Activated naive CD4-positive, alpha-beta T cell treated with anti-CD3 and anti-CD28 coated beads for 36 hours (primary cell): ENCODE measurements at regions of chr9 and their contacts with region 1.

Region 1: GRCh38 chr9:77475641-77476473 is 172.3 kb downstream of the GNA14 start:
- DNase-seq: peak; percentile 87
- H3K4me3 Mint-ChIP-seq: no peak overlapping the region
- H3K27ac Mint-ChIP-seq: peak overlapping the region; percentile 91
- H3K4me1 Mint-ChIP-seq: peaks cover 27% of the 10 kb centered on the region
- H3K27me3 Mint-ChIP-seq: no peaks in the 10 kb centered on the region

Region 2: GRCh38 chr9:76441551-76442322 is 1034.1 kb before region 1 on chr9:
- CTCF ChIA-PET with region 1: no interaction called
- intact Hi-C with region 1: loop called (anchors 5 kb)
- DNase-seq: peak; percentile 49
- H3K4me3 Mint-ChIP-seq: peak overlapping the region; percentile 28
- H3K27ac Mint-ChIP-seq: peak overlapping the region; percentile 77
- H3K4me1 Mint-ChIP-seq: peaks cover 24% of the 10 kb centered on the region
- H3K27me3 Mint-ChIP-seq: peaks cover 8% of the 10 kb centered on the region

Region 3: DNA sequence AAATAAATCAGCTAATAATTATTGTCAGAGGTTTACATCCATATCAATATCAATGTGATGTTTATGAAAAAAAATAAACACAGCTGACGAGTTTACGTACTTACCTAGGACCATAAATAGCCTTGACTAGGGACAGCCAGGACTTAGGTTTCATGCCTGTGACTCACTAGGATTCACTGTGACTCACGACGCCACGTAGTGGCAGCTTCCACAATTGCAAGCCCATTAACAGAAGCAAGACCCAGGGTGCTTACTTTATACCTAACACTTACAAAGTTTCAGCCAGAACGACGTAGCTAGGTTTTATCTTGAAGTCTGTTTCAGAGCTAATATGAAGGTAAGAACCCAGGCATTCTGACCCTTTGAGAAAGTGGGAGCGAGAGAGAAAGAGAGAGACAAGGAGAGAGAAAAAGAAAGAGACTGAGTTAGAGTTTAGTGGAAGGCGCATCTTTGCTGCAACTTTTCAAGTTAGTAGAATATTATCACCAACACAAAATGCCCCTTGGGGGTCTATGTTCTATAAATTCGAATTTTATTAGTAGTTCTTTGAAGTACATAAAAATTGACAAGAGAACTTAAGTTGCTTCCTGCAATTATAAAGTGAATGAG is 18.9 kb before region 1 on chr9:
- CTCF ChIA-PET with region 1: interaction called, 27 read pairs
- intact Hi-C with region 1: loop called (anchors 1 kb)
- DNase-seq: peak; percentile 93
- H3K4me3 Mint-ChIP-seq: no peak overlapping the region
- H3K27ac Mint-ChIP-seq: no peak overlapping the region
- H3K4me1 Mint-ChIP-seq: peaks cover 24% of the 10 kb centered on the region
- H3K27me3 Mint-ChIP-seq: no peaks in the 10 kb centered on the region

Region 4: DNA sequence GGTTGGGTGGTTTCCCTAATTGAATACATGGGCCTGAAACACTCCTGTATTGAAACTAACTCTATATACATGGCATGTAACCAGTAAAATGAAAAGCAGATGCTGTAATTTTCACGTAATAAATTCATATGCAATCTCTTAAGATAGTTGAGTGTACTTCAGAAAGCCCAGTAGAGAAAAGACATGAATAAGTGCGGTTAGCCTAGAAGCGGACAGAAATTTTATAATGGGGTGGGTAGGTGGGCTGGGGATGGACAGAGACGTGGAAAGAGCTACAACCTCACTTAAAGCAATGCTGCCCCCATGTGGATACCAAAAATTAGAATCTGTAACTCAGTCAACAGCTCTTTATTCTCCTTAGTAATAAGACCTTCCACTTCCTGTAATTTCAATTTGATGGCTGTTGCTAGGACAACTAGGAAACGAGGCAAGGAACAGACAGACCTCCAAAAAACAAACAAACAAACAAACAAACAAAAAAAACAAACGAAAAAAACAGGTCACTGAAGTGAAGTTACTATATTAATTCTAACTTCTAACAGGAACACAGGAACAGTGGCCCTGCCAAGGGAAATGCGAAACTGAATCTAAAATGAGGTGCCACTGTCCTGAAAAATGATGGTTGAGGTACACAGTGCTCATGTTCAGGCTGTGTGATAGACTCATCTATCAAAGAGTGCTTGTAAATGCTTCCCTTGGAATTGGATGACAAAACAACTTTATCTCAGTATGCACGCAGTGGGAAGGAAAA is 275.7 kb after region 1 on chr9:
- CTCF ChIA-PET with region 1: no interaction called
- intact Hi-C with region 1: loop called (anchors 2 kb)
- DNase-seq: peak; percentile 26
- H3K4me3 Mint-ChIP-seq: no peak overlapping the region
- H3K27ac Mint-ChIP-seq: no peak overlapping the region
- H3K4me1 Mint-ChIP-seq: peaks cover 34% of the 10 kb centered on the region
- H3K27me3 Mint-ChIP-seq: no peaks in the 10 kb centered on the region

Region 5: DNA sequence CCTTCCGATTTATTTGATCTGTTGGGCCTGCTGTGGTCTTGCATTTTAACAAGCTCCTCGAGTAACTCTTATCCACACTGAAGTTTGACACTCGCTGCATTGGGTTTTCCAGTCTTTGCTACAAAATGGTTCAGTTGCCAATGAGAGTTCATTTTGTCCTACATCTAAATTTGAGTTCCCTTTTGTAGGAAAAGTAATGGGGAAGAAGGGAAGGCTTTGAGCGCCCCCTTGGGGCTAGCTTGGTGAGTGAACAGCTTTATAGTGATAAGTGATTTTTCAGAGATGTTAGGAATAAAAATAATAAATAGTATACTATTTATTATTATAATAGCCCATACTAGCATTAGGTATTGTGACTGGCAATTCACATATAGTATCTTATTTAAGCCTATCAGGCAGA is 645.6 kb after region 1 on chr9:
- CTCF ChIA-PET with region 1: no interaction called
- intact Hi-C with region 1: loop called (anchors 1 kb)
- DNase-seq: peak; percentile 79
- H3K4me3 Mint-ChIP-seq: no peak overlapping the region
- H3K27ac Mint-ChIP-seq: no peak overlapping the region
- H3K4me1 Mint-ChIP-seq: peaks cover 33% of the 10 kb centered on the region
- H3K27me3 Mint-ChIP-seq: no peaks in the 10 kb centered on the region

Region 6: DNA sequence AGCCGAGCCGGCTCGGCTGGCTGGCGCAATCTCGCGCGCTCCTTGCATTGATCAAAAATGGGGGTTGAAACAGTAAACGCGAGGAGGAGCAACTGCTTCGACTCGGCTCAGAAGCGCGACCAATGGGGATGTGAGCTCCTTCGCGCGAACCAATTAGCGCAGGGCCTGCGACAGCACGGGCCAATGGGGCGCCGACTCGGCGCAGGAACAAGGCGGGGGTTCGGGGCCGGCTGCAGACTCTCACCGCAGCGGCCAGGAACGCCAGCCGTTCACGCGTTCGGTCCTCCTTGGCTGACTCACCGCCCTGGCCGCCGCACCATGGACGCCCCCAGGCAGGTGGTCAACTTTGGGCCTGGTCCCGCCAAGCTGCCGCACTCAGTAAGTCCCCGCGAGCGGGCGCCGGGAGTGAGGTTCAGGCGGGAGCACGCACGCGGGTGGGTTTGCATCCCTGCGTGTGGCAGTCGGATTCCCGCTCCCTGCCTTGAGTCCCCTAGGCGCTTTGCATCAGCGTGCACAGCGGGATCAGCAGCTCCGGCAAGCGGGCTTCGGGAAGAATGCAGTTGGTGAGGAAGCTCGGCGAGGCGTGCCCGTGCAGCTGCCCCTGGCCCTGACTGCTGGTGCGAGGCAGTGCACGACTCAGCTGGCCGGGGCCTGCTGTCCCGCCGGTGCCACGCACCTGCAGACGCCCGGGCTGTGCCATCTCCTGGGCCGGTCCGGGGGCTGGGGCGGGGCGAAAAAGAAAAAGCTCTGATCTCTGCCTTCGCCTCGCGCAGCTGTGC is 821.2 kb after region 1 on chr9 and contains the start of gene PSAT1:
- CTCF ChIA-PET with region 1: no interaction called
- intact Hi-C with region 1: loop called (anchors 10 kb)
- DNase-seq: peak; percentile 95
- H3K4me3 Mint-ChIP-seq: peak within 1 kb of the TSS; percentile 81
- H3K27ac Mint-ChIP-seq: peak within 1 kb of the TSS; percentile 94
- H3K4me1 Mint-ChIP-seq: peaks cover 40% of the 10 kb centered on the region
- H3K27me3 Mint-ChIP-seq: no peaks in the 10 kb centered on the region
- total RNA-seq, gene PSAT1: 235 to 240 TPM